Heart right ventricle (tissue), 16 donors: ENCODE measurements at regions of chr20 and their contacts with region 1.

Region 1: GRCh38 chr20:55253781-55254180 is 751.5 kb downstream of the CBLN4 start:
- DNase-seq: peak in 1 of 2 donors; percentile 13
- ATAC-seq: peak; percentile 94 to 99 (median 96)
- H3K4me3 ChIP-seq: no peak overlapping the region
- H3K27ac ChIP-seq: peak overlapping the region in 9 of 10 donors; percentile 46 to 78 (median 72)
- H3K4me1 ChIP-seq: peaks cover 11 to 39% (median 21%) of the 10 kb centered on the region in 9 donors
- H3K27me3 ChIP-seq: no peaks in the 10 kb centered on the region
- CTCF ChIP-seq: no peak

Region 2: GRCh38 chr20:55172310-55172995 is 81.3 kb before region 1 on chr20:
- intact Hi-C with region 1: loop called in 1 of 10 experiments (anchors 10 kb)
- DNase-seq: no peak
- ATAC-seq: no peak
- H3K4me3 ChIP-seq: no peak overlapping the region
- H3K27ac ChIP-seq: no peak overlapping the region
- H3K4me1 ChIP-seq: peaks cover 0 to 5% (median 0%) of the 10 kb centered on the region in 9 donors
- H3K27me3 ChIP-seq: no peaks in the 10 kb centered on the region
- CTCF ChIP-seq: no peak